ENCODE measurements at regions of chr11 and their contacts with region 1.

Region 1: GRCh38 chr11:69101115-69101791 is 52.5 kb downstream of the TPCN2 start:
- DNase-seq: peak; percentile 83
- ATAC-seq: peak; percentile 89 to 91

Region 2: DNA sequence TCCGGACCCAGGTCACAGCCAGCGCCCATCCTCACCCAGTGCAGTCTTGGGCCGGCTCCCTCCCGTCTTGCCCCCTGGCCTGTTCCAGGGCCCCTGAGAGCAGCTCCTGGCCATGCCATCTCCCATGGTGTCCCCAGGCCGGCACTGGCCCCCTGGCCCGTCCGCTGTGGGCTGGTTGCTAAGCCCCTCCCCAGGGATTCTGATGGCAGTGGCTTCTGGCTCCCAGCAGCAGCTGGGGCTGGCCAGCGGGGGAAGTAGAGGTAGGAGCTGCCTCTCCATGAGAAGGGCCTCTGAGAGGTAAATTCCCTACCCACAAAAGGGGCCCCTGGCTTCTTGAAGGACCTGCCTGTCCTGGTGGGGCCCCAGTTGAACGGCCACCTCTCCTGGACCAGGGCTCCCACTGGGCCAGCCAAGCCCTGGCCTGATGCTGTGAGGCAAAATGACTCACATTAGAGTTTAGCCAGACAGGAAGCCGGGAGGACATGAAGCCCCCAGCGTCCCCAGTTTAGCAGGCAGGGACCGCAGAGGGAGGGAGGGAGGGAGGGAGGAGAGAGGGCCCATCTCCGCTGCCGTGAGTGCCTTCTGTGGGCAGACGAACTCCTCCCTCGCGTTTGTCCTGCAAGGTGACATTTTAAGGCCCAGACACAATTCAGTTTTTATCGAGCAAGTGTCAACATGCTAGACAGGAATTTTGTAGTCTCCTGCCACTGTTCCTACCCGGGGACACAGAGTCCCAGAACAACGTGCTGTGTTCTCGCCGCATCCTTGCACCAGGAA is 449.9 kb before region 1 on chr11:
- intact Hi-C with region 1: no loop called
- DNase-seq: no peak
- ATAC-seq: no peak

Region 3: DNA sequence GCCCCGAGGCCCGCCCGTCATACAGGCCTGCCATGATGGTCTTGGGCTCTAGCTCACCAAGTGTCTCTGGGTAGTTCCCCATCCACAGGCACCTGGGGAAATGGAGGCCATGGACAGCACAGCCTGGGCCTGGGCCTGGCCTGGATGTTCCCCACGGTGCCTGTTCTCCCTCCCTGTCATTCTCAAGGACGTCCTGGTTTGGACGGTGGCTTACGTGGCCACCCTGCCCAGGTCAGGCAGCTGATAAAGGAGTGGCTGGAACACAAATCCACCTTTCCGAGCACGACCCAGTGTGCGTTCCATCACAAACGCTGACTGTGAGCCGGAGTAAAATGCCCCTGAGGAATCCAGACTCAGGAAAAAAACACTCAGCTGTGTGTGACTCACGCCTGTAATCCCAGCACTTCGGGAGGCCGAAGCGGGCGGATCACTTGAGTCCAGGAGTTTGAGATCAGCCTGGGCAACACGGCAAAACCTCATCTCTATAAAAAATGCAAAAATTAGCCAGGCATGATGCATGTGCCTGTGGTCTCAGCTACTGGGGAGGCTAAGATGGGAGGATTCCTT is 308.8 kb before region 1 on chr11:
- intact Hi-C with region 1: no loop called
- DNase-seq: no peak
- ATAC-seq: peak in 1 of 2 donors; percentile 46

Region 4: DNA sequence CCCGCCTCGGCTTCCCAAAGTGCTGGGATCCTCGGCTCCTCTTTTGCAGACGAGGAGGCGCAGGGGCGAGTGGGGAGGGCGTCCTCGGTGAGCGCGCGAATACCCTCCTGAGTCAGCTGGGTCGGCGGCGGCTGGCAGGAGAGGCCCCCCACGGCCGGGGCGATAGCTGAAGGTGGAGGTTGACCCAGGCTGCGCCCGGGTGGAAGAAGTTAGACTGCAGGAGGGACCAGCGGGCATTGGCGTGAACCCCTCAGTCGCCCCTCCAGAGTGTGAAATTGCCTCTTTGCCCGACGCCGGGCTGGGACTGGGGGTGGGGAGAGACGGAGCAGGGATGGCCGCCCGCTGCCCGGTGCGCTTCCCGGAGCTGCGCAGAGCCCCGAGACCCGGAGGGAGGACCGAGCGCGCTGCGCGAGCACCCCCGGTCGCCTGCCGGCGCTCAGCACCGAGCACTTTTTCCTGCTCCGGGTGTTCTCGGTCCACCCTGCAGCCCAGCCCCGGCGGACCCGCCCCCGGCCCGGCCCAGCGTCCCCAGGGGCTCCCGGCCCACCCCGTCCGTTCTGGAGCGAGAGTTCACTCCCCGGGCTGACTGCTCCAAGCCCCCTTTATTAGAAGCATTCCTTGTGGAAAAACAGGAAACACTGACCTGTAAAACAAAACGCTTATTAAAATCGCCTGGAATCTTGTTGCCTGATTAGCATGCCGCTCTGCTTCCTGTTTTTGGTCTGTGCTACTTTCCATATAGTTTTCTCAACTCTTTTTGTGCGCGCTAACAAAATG is 245.9 kb before region 1 on chr11:
- intact Hi-C with region 1: no loop called
- DNase-seq: peak; percentile 52
- ATAC-seq: peak; percentile 98

Region 5: DNA sequence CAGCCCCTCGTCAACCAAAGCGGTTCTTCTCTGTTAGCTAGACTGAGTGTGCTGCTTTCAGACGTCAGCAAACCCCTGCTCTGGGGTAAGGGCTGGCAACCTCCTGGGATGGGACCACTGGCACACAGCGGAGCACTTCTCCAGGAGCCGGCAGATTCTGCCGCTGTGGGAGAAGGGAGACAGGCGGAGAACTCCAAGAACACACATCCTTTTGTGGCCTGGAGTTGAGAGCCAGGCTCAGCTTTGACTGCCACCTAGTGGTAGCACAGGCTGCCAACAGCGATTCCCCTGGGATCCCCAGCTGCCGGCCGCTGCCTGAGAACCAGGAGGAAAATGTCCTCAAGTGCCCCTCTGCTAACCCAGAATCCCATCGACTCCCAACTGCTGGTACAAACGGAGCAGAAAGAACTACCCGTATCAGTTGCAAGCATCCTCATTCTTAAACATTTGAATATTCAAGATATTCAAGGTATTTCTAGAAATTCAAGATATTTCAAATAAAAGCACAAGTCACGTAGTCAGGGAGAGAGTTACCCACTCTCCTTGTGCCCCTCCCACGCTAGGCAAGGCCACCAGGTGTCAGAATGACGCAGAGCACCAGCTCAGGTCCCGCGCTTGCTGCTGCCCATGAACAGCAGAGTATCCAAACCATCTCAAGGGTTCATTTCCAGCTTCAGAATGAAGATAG is 569.0 kb after region 1 on chr11:
- intact Hi-C with region 1: loop called (anchors 2 to 5 kb)
- DNase-seq: peak; percentile 84
- ATAC-seq: peak; percentile 59 to 77

Measured in left cardiac atrium (tissue), 4 donors.